ENCODE measurements at regions of chr11 and their contacts with region 1.

Region 1: DNA sequence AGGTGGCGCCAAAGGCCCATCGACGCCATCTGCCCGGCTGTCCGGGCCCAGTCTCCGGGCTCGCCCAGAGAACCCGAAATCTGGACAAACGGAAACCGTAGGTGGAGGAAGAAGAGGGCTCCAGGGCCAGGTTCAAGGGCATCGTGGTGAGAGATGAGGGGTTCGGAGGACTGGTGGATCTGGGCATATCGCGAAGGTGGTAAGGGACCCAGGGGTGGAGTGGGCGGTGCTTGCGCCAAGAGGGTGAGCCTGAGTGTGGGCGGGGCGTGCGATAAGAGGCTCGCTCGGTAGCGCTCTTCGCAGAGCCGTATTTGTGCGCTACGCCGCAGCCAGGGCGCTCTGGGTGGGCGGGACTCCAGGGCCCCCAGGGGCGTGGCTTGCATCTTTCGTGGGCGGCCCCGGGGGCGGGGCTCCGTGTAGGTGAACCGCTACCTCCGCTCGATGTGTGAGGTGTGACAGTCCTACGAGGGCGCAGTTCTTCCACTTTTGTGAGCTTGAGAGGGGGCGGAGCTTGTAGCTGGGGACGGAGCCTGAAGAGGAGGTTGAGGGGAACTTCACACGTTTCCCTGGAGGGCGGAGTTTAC is 4.8 kb downstream of the CD248 start:
- DNase-seq: peak in 3 of 4 donors; percentile 94 to 95 (median 95)
- ATAC-seq: peak; percentile 81
- H3K4me3 ChIP-seq: peak overlapping the region; percentile 37 to 62
- H3K27ac ChIP-seq: peak overlapping the region; percentile 86 to 88
- H3K4me1 ChIP-seq: peaks cover 0 to 31% of the 10 kb centered on the region in 2 donors
- H3K27me3 ChIP-seq: peaks cover 0 to 17% of the 10 kb centered on the region in 2 donors
- CTCF ChIP-seq: no peak

Region 2: DNA sequence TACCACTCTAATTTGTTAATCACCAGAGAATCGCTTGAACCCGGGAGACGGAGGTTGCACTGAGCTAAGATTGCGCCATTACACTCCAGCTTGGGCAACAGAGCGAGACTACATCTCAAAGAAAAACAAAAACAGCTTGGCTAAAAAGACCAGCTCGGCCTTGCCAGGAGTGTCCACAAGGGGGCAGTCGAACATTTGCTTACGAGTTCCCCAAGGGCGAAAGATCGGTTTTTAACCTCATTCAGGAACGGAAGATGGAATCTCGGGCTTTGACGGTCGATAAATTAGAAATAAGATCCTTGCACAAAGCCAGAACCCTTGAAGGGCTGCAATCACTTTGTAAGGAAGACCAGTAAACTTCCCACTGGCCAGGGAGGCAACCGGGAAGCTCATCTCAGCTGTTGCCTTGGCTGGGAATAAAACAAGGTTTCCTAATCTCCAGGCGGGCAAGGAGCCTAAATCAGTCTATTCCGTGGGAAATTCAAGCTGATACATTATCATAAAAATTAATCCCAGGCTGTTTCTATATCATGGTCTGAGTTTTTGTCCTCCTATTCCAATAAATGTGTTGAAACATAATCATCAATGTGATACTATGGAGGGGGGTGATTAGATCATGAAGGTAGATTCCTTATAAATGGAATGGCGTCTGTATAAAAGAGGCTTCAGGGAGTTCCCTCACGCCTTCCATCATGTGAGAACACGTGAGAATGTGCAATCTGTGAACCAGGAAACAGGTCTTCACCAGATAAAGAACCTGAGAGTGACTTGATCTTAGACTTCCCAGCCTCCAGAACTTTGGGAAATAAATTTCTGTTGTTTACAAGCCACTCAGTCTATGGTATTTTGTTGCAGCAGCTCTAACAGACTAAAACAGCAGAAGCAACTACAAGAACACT is 74.4 kb after region 1 on chr11:
- intact Hi-C with region 1: loop called in 1 of 2 experiments (anchors 10 kb)
- DNase-seq: peak in 3 of 4 donors; percentile 54 to 79 (median 67)
- ATAC-seq: peak; percentile 92
- H3K4me3 ChIP-seq: no peak overlapping the region
- H3K27ac ChIP-seq: no peak overlapping the region
- H3K4me1 ChIP-seq: peaks cover 0 to 3% of the 10 kb centered on the region in 2 donors
- H3K27me3 ChIP-seq: peaks cover 0 to 11% of the 10 kb centered on the region in 2 donors
- CTCF ChIP-seq: peak; percentile 89 to 93

Region 3: DNA sequence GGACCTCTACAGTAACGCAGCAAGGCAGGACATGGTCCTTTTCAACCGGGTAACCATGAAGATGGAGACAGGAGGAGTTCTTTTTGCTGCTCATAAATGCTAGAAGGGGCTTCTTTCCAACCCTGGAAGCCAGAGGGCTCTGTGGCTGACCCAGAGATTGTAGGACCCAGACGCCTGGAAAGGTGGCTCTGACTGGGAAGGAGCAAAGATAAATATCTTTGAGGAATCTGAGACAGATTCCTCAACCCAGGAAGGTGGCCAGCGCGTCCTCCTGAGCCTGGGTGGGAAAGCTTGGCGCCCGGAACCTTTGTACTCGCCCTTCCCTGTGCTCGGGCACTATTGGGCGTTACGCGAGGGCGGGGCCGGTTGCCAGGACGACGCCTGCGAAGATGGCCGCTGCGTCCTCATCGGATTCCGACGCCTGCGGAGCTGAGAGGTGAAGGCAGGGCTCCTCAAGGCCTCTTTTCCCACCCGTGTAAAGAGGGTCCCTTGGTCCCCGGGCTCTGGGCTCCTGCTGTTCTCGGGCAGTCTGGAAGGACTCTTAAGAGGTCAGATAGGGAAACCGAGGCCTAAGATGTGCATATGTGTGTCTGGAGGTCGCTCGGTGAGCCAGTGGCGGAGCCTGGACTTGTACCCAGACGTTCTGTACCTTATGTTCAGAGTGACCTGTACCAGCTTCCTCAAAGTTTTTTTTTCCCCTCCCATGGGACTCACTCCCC is 198.4 kb after region 1 on chr11 and contains the start of gene BBS1:
- intact Hi-C with region 1: no loop called
- DNase-seq: peak; percentile 83 to 97 (median 86)
- ATAC-seq: peak; percentile 99
- H3K4me3 ChIP-seq: peak within 1 kb of the TSS; percentile 66 to 99
- H3K27ac ChIP-seq: peak within 1 kb of the TSS in 1 of 2 donors; percentile 84
- H3K4me1 ChIP-seq: peaks cover 11 to 21% of the 10 kb centered on the region in 2 donors
- H3K27me3 ChIP-seq: no peaks in the 10 kb centered on the region
- CTCF ChIP-seq: no peak
- polyA plus RNA-seq, gene BBS1: 58.4 to 75.1 (median 64.6) TPM

Region 4: GRCh38 chr11:66530927-66531709 is 219.1 kb after region 1 on chr11:
- intact Hi-C with region 1: no loop called
- DNase-seq: peak in 1 of 4 donors; percentile 49
- ATAC-seq: no peak
- H3K4me3 ChIP-seq: no peak overlapping the region
- H3K27ac ChIP-seq: no peak overlapping the region
- H3K4me1 ChIP-seq: no peaks in the 10 kb centered on the region
- H3K27me3 ChIP-seq: no peaks in the 10 kb centered on the region
- CTCF ChIP-seq: no peak

Measured in left lung (tissue), 14 donors.